ENCODE measurements at regions of chr10 and their contacts with region 1.

Region 1: GRCh38 chr10:75029857-75030256 is 81.6 kb upstream of the SAMD8 start:
- DNase-seq: no peak
- ATAC-seq: no peak
- H3K4me3 ChIP-seq: no peak overlapping the region
- H3K27ac ChIP-seq: no peak overlapping the region
- H3K4me1 ChIP-seq: peaks cover 7% of the 10 kb centered on the region; the same call in 1 of the 2 replicates
- H3K27me3 ChIP-seq: no peaks in the 10 kb centered on the region
- CTCF ChIP-seq: no peak
- EP300 ChIP-seq: no peak
- POLR2A ChIP-seq: no peak
- RAD21 ChIP-seq: no peak

Region 2: GRCh38 chr10:74244097-74244685 is 785.7 kb before region 1 on chr10:
- CTCF ChIA-PET with region 1: no interaction called
- POLR2A ChIA-PET with region 1: no interaction called
- in situ Hi-C with region 1: loop called (anchors 10 kb)
- intact Hi-C with region 1: no loop called
- DNase-seq: peak; percentile 7
- ATAC-seq: no peak
- H3K4me3 ChIP-seq: no peak overlapping the region
- H3K27ac ChIP-seq: no peak overlapping the region
- H3K4me1 ChIP-seq: no peaks in the 10 kb centered on the region
- H3K27me3 ChIP-seq: no peaks in the 10 kb centered on the region
- CTCF ChIP-seq: peak; percentile 44
- EP300 ChIP-seq: no peak
- POLR2A ChIP-seq: no peak
- RAD21 ChIP-seq: no peak

Region 3: DNA sequence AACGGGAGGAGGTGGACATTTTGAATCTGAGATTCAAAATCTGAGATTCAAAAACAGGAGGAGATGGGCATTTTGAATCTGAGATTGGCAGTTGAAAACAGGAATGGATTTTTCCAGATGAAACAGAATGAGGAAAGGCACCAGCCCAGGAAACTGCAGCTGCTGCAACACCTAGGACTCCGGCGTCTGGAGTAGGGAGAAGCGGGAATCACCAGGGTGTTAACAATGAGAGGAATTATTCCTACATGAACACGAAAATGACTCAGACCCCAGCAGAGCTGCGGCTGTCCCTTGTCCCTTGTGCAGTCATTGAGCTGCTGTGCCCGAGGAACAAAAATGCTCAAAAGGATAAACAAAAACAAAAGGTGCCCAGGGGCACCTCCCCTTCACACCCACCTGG is 263.4 kb before region 1 on chr10:
- CTCF ChIA-PET with region 1: no interaction called
- POLR2A ChIA-PET with region 1: no interaction called
- in situ Hi-C with region 1: no loop called
- intact Hi-C with region 1: loop called (anchors 10 kb)
- DNase-seq: no peak
- ATAC-seq: peak; percentile 56; the same call in 2 of the 3 replicates
- H3K4me3 ChIP-seq: peak overlapping the region in 1 of 3 experiments; percentile 6; a peak in 1 of 6 replicates
- H3K27ac ChIP-seq: no peak overlapping the region
- H3K4me1 ChIP-seq: peaks cover 36% of the 10 kb centered on the region
- H3K27me3 ChIP-seq: peaks cover 0 to 7% of the 10 kb centered on the region in 2 experiments; a peak in 1 of 5 replicates
- CTCF ChIP-seq: no peak
- EP300 ChIP-seq: no peak
- POLR2A ChIP-seq: no peak
- RAD21 ChIP-seq: no peak

Region 4: GRCh38 chr10:74977913-74978847 is 51.7 kb before region 1 on chr10:
- CTCF ChIA-PET with region 1: no interaction called
- POLR2A ChIA-PET with region 1: no interaction called
- in situ Hi-C with region 1: no loop called
- intact Hi-C with region 1: no loop called
- DNase-seq: no peak
- ATAC-seq: no peak
- H3K4me3 ChIP-seq: no peak overlapping the region
- H3K27ac ChIP-seq: no peak overlapping the region
- H3K4me1 ChIP-seq: peaks cover 17% of the 10 kb centered on the region
- H3K27me3 ChIP-seq: no peaks in the 10 kb centered on the region
- CTCF ChIP-seq: no peak
- EP300 ChIP-seq: no peak
- POLR2A ChIP-seq: no peak
- RAD21 ChIP-seq: no peak